WTC11 (cell line): ENCODE measurements at regions of chr7 and their contacts with region 1.

Region 1: GRCh38 chr7:146126767-146127509 is 10.3 kb downstream of the CNTNAP2 start:
- DNase-seq: no peak
- ATAC-seq: peak; percentile 48; the same call in 1 of the 2 replicates
- H3K4me3 Mint-ChIP-seq: no peak overlapping the region
- H3K27ac Mint-ChIP-seq: no peak overlapping the region; the same call in 1 of the 2 replicates
- H3K4me1 Mint-ChIP-seq: 0 out of 2 replicates have a peak, but pooled peaks cover 5% of the 10 kb centered on the region
- H3K27me3 Mint-ChIP-seq: no peaks in the 10 kb centered on the region
- CTCF ChIP-seq: no peak

Region 2: DNA sequence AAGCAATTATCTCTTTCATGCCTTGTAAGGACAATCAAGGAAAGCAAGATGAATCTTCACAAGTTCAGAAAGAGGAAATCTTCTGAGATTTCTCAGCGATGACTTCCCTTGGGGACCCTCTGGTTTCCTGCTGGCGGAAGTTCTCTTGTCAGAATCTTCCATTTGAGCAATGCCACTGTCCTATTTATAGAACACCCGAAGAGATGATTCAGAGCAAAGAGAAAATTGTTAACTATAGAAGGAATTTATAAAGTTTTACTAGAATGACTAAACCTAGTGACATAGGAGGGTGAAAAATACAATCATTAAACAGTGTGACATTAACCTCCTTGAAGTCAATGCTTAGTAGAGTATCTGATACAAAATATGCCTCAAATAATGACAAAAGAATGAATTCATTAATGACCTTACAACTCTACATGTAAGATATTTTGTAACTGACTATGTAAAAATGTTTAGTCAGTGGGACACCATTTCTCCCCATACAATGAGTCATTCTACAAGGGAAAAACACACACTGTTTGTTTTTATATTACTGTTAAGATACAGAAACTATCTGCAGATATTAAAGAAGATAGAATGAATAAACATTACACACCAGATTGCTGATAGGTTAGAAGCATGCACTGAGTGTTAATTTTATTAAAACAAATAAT is 216.9 kb before region 1 on chr7:
- CTCF ChIA-PET with region 1: no interaction called
- POLR2A ChIA-PET with region 1: no interaction called
- DNase-seq: no peak
- ATAC-seq: no peak
- H3K4me3 Mint-ChIP-seq: no peak overlapping the region
- H3K27ac Mint-ChIP-seq: no peak overlapping the region
- H3K4me1 Mint-ChIP-seq: no peaks in the 10 kb centered on the region
- H3K27me3 Mint-ChIP-seq: no peaks in the 10 kb centered on the region
- CTCF ChIP-seq: no peak

Region 3: GRCh38 chr7:146096994-146097393 is 29.9 kb before region 1 on chr7:
- CTCF ChIA-PET with region 1: interaction called, 11 read pairs
- POLR2A ChIA-PET with region 1: no interaction called
- DNase-seq: peak; percentile 68
- ATAC-seq: peak; percentile 99
- H3K4me3 Mint-ChIP-seq: no peak overlapping the region
- H3K27ac Mint-ChIP-seq: no peak overlapping the region
- H3K4me1 Mint-ChIP-seq: peaks cover 2% of the 10 kb centered on the region; the same call in 1 of the 2 replicates
- H3K27me3 Mint-ChIP-seq: no peaks in the 10 kb centered on the region; the same call in 1 of the 2 replicates
- CTCF ChIP-seq: peak; percentile 26; the same call in 1 of the 2 replicates